Heart left ventricle (tissue), 16 donors: ENCODE measurements at regions of chr5 and their contacts with region 1.

Region 1: GRCh38 chr5:127030259-127031146 is at the start of gene MARCHF3:
- DNase-seq: peak; percentile 95 to 98 (median 97)
- ATAC-seq: peak; percentile 98 to 99 (median 99)
- H3K4me3 ChIP-seq: peak within 1 kb of the TSS; percentile 69 to 97 (median 90)
- H3K27ac ChIP-seq: peak within 1 kb of the TSS; percentile 73 to 96 (median 92)
- H3K4me1 ChIP-seq: peaks cover 0 to 40% (median 23%) of the 10 kb centered on the region in 12 donors
- H3K27me3 ChIP-seq: no peaks in the 10 kb centered on the region
- CTCF ChIP-seq: peak in 8 of 12 donors; percentile 10 to 50 (median 36)
- POLR2A ChIP-seq: peak; percentile 52 to 98
- total RNA-seq, gene MARCHF3: 19.9 to 50.3 (median 38.0) TPM

Region 2: GRCh38 chr5:126846344-126846743 is 184.2 kb before region 1 on chr5:
- intact Hi-C with region 1: loop called in 7 of 10 experiments (anchors 5 to 10 kb)
- DNase-seq: no peak
- ATAC-seq: no peak
- H3K4me3 ChIP-seq: no peak overlapping the region
- H3K27ac ChIP-seq: peak overlapping the region in 5 of 12 donors; percentile 13 to 71 (median 52)
- H3K4me1 ChIP-seq: peaks cover 0 to 48% (median 31%) of the 10 kb centered on the region in 12 donors
- H3K27me3 ChIP-seq: no peaks in the 10 kb centered on the region
- CTCF ChIP-seq: peak in 1 of 12 donors; percentile 13
- POLR2A ChIP-seq: no peak

Region 3: DNA sequence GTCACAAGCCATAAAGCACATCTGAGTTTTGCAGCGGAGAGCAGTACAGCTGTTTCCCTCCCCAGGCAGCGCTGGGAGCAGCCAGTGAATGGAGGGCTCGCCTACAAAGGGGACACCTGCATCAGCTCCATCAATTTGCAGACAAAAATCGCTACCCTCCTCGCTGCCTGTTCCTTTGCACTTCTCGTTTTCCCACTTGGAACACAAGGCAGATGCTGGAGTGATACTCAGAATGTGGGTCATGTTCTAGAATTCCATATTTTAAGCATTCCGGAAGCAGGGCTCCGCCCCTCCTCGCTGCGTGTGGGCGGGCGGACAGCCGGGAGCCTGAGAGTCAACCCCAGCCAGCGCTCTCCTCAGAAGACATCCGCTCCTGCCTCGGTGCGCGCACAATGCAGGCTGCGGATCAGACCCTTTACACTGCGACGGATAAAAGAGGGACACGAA is 161.5 kb before region 1 on chr5:
- intact Hi-C with region 1: loop called in 1 of 10 experiments (anchors 2 kb)
- DNase-seq: peak in 4 of 5 donors; percentile 40 to 70 (median 48)
- ATAC-seq: peak in 3 of 4 donors; percentile 67 to 83 (median 78)
- H3K4me3 ChIP-seq: peak overlapping the region in 7 of 12 donors; percentile 10 to 35 (median 22)
- H3K27ac ChIP-seq: no peak overlapping the region
- H3K4me1 ChIP-seq: peaks cover 0 to 27% (median 5%) of the 10 kb centered on the region in 12 donors
- H3K27me3 ChIP-seq: no peaks in the 10 kb centered on the region
- CTCF ChIP-seq: no peak
- POLR2A ChIP-seq: no peak

Region 4: GRCh38 chr5:126965061-126965475 is 65.4 kb before region 1 on chr5:
- intact Hi-C with region 1: loop called in 7 of 10 experiments (anchors 5 to 10 kb)
- DNase-seq: no peak
- ATAC-seq: no peak
- H3K4me3 ChIP-seq: no peak overlapping the region
- H3K27ac ChIP-seq: peak overlapping the region in 4 of 12 donors; percentile 2 to 36 (median 8)
- H3K4me1 ChIP-seq: peaks cover 0 to 20% (median 7%) of the 10 kb centered on the region in 12 donors
- H3K27me3 ChIP-seq: no peaks in the 10 kb centered on the region
- CTCF ChIP-seq: no peak
- POLR2A ChIP-seq: no peak

Region 5: GRCh38 chr5:126984632-126985031 is 45.9 kb before region 1 on chr5:
- intact Hi-C with region 1: loop called in 4 of 10 experiments (anchors 5 to 10 kb)
- DNase-seq: no peak
- ATAC-seq: no peak
- H3K4me3 ChIP-seq: no peak overlapping the region
- H3K27ac ChIP-seq: peak overlapping the region in 9 of 12 donors; percentile 3 to 88 (median 68)
- H3K4me1 ChIP-seq: peaks cover 0 to 74% (median 28%) of the 10 kb centered on the region in 12 donors
- H3K27me3 ChIP-seq: no peaks in the 10 kb centered on the region
- CTCF ChIP-seq: no peak
- POLR2A ChIP-seq: no peak